ENCODE measurements at regions of chr11 and their contacts with region 1.

Region 1: DNA sequence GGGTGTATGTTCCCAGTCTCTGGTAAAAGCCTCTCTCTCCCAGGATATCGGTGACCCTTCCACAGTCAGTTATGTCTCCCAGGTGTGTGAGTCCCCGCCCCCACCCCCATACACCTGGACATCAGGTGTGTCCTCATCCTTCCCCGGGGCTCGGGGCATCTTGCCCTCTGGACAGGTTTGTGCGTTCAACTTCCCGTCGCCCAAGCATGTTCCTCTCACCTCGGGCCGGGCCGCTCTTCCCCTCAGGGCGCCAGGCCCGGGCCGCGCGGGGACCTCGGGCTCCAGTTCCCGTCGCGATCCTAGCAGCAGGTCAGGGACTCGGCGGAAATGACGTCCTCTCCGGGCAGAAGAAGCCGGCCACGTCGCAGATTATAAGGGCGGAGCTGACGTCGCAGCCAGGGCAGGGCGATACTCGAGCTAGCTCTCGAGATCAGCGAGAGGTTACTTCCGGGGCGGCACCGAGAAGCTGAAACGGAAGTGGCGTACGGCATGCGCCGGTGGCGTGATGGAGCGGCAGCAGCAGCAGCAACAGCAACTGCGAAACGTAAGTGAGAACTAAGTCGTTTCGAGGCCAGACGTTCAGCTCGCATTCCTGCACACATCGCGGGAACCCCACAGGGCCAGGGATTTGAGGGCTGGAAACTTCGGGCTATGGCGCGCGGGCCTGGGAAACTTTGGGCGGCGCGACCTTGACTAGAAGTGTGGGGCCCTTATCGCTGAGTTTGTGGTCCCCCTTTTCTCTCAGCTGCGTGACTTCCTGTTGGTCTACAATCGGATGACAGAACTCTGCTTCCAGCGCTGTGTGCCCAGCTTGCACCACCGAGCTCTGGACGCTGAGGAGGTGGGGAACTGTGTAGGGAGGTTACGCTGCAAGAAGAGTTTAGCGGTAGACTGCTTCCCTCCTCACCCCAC is at the starts of genes ARFIP2 and TIMM10B:
- DNase-seq: peak; percentile 92
- ATAC-seq: peak; percentile 95
- H3K4me3 Mint-ChIP-seq: peak within 1 kb of the TSS; percentile 95
- H3K27ac Mint-ChIP-seq: peak within 1 kb of the TSS; percentile 97
- H3K4me1 Mint-ChIP-seq: peaks cover 42% of the 10 kb centered on the region
- H3K27me3 Mint-ChIP-seq: no peaks in the 10 kb centered on the region
- CTCF ChIP-seq: no peak
- total RNA-seq, gene ARFIP2: 40.6 and 43.1 TPM in 2 replicates
- total RNA-seq, gene TIMM10B: 48.0 and 60.0 TPM in 2 replicates

Region 2: DNA sequence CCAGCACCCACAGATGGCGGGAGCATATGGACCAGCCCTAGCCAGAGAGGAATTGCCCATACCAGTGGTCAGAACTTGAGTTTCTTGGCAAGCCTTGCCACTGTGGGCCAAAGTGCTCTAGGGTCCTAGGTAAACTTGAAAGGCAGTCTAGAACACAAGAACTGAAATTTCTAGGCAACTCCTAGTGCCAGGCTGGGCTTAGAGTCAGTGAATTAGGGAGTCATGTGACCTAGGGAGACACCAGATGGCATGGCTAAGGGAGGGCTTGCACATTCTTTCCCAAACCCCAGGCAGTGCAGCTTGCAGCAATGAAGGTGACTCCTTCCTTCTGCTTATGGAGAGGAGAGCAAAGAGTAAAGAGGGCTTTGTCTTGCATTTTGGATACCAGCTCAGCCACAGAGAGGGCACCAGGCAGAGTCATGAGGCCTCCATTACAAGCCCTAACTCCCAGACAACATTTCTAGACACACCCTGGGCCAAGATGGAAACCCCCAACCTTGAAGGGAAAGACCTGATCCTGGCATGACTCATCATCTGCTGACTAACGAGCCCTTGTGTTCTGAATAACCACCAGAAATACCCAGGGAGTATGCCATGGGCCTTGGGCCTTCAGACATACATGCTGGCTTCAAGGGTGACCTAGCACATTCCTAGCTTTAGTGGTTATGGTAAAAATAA is 558.4 kb before region 1 on chr11:
- CTCF ChIA-PET with region 1: no interaction called
- POLR2A ChIA-PET with region 1: no interaction called
- intact Hi-C with region 1: no loop called
- DNase-seq: no peak
- ATAC-seq: no peak
- H3K4me3 Mint-ChIP-seq: no peak overlapping the region
- H3K27ac Mint-ChIP-seq: no peak overlapping the region
- H3K4me1 Mint-ChIP-seq: no peaks in the 10 kb centered on the region
- H3K27me3 Mint-ChIP-seq: no peaks in the 10 kb centered on the region
- CTCF ChIP-seq: no peak

Region 3: DNA sequence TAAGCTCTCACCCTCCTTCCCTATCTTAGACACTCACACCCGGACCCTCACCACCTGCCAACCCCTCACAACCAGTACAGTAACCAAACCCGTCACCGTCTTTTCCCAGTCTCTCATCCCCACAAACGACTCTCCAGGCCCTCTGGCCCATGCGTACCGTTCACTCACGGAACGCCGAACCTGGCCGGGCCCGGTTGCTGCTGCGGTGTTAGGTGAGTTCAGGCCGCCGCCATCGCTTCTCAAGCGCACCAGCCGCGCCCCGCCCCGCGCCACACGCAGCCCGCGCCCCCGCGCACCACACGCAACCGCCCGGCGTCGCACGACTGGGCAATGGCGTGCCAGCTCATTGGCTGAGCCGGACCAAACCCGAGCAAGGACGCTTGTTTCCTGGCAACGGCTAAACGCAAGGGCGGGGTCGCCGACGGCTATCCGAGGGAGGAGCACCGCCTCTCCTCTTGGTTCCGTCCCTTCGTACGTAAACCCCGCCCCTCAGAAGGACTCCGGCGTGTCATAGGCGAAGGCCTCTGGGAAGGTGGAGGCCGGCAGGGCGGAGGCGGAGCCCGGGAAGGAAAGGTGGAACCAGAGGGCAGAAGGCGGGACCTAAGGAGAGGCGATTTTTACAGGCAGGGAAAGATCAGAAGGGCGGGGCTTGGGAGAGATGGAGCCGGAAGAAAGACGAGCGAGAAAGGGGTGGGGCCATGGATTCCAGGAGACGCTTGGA is 246.7 kb before region 1 on chr11 and contains the start of gene FHIP1B:
- CTCF ChIA-PET with region 1: no interaction called
- POLR2A ChIA-PET with region 1: no interaction called
- intact Hi-C with region 1: loop called (anchors 1 kb)
- DNase-seq: peak; percentile 95
- ATAC-seq: peak; percentile 93
- H3K4me3 Mint-ChIP-seq: peak within 1 kb of the TSS; percentile 99
- H3K27ac Mint-ChIP-seq: peak within 1 kb of the TSS; percentile 92
- H3K4me1 Mint-ChIP-seq: peaks cover 32% of the 10 kb centered on the region
- H3K27me3 Mint-ChIP-seq: peaks cover 3% of the 10 kb centered on the region
- CTCF ChIP-seq: no peak
- total RNA-seq, gene FHIP1B: 27.7 and 32.8 TPM in 2 replicates

Region 4: GRCh38 chr11:6419009-6419631 is 62.1 kb before region 1 on chr11 and contains the start of gene APBB1:
- CTCF ChIA-PET with region 1: no interaction called
- POLR2A ChIA-PET with region 1: interaction called, 7 read pairs
- intact Hi-C with region 1: loop called (anchors 1 kb)
- DNase-seq: peak; percentile 76
- ATAC-seq: peak; percentile 80
- H3K4me3 Mint-ChIP-seq: peak within 1 kb of the TSS; percentile 80
- H3K27ac Mint-ChIP-seq: peak within 1 kb of the TSS; percentile 71
- H3K4me1 Mint-ChIP-seq: peaks cover 4% of the 10 kb centered on the region
- H3K27me3 Mint-ChIP-seq: peaks cover 27% of the 10 kb centered on the region
- CTCF ChIP-seq: no peak
- total RNA-seq, gene APBB1: 20.6 and 22.1 TPM in 2 replicates

Region 5: DNA sequence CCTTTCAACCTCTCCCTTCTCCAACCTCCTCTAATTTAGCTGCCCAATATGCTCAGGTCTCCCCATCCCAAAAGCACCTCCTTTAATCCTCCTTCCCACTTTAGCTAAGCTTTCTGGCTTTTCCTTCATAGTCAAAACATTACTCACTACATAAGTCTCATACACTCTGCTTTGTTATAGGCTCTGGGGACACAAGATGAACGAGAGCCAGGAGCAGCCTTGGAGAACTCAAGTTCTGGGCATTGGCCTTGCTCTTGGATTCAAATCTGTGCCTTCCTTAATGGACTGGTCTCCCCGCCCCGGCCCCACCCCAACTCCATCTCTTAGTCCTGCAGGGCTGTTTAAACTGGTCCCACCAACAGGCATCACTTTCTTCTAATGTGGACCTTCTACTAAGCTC is 29.0 kb before region 1 on chr11:
- CTCF ChIA-PET with region 1: no interaction called
- POLR2A ChIA-PET with region 1: no interaction called
- intact Hi-C with region 1: no loop called
- DNase-seq: no peak
- ATAC-seq: no peak
- H3K4me3 Mint-ChIP-seq: no peak overlapping the region
- H3K27ac Mint-ChIP-seq: no peak overlapping the region
- H3K4me1 Mint-ChIP-seq: no peaks in the 10 kb centered on the region
- H3K27me3 Mint-ChIP-seq: no peaks in the 10 kb centered on the region
- CTCF ChIP-seq: no peak

Region 6: GRCh38 chr11:6612213-6613041 is 131.2 kb after region 1 on chr11 and contains the start of gene TAF10:
- CTCF ChIA-PET with region 1: no interaction called
- POLR2A ChIA-PET with region 1: interaction called, 20 read pairs
- intact Hi-C with region 1: loop called (anchors 1 kb)
- DNase-seq: peak; percentile 92
- ATAC-seq: peak; percentile 83
- H3K4me3 Mint-ChIP-seq: peak within 1 kb of the TSS; percentile 85
- H3K27ac Mint-ChIP-seq: peak within 1 kb of the TSS; percentile 85
- H3K4me1 Mint-ChIP-seq: peaks cover 29% of the 10 kb centered on the region
- H3K27me3 Mint-ChIP-seq: no peaks in the 10 kb centered on the region
- CTCF ChIP-seq: no peak
- total RNA-seq, gene TAF10: 149 and 154 TPM in 2 replicates

Region 7: DNA sequence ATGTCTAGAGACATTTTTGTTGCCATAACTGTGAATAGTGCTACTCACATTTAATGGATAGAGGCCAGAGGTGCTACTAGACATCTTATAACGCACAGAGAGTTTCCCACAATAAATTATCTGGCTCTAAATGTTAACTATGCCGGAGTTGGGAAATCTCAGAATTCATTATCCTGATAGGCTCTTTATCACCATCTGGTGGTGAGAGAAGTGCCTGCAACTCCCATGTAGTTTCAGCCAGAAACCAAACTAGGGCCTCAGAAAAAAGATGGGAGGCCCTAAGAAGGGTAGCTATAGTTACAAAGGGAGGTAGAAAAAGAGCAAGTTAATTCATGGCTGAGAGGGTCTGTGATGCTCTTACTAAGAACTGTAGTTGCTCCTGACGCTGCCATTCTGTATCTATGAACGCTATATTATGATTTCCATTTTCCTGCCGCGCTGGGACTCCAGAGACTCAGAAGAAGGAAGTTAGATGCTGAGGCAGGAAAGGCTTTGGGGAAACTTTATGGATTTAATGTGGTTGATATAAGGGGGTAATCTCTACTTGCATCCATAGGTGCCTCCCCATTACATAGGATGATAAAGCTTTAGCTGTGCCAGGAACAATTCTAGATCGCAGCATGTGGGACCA is 224.8 kb after region 1 on chr11:
- CTCF ChIA-PET with region 1: interaction called, 3 read pairs
- POLR2A ChIA-PET with region 1: no interaction called
- intact Hi-C with region 1: loop called (anchors 1 kb)
- DNase-seq: no peak
- ATAC-seq: peak; percentile 66
- H3K4me3 Mint-ChIP-seq: no peak overlapping the region
- H3K27ac Mint-ChIP-seq: peak overlapping the region; percentile 60
- H3K4me1 Mint-ChIP-seq: peaks cover 19% of the 10 kb centered on the region
- H3K27me3 Mint-ChIP-seq: no peaks in the 10 kb centered on the region
- CTCF ChIP-seq: peak; percentile 92

Measured in activated B cell treated with CpG ODN at 0.5 μM for 24 hours (primary cell).